Naive thymus-derived CD8-positive, alpha-beta T cell (primary cell): ENCODE measurements at regions of chr12 and their contacts with region 1.

Region 1: DNA sequence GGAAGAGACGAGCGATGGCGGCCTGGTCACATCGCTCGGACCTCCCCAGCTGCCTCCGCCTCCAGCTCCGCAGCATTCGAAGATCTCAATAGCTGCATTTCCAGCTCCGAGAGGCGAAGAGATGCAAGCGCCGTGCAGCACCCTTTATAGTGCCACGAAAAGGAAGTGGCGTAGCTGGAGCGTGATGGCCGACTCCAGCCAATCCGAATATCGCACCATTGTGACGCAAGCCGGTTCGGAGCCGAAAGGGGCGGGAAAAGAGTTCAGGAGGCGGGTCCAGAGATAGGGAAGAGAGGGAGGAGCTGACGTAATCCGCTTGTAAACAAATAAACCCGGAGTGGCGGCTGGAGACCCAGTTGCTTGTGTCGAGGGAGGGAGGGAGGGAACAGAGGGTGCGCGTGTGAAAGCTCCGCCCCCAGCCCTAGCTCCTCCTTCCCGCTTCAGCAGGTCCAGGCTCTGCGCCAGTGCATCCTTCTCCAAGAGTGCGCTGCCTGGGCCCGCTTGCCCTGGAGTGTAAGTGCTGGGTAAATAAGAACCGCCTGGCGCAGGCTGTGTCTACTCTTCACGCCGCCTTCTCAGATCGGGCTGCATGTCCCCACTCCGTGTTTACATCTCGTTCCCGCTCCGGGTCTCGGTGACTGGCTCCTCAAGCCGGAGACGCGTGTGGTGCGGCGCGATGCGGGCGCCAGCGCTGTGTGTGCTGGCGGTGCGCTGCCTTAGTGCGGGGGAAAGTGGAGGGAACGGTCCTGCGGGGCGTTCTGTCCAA is at the start of gene BTG1:
- DNase-seq: peak; percentile 87 to 100 (median 100)
- ATAC-seq: peak; percentile 68 to 72
- H3K4me3 Mint-ChIP-seq: peak within 1 kb of the TSS; percentile 89 to 100 (median 100)
- H3K27ac Mint-ChIP-seq: peak within 1 kb of the TSS; percentile 91 to 100 (median 99)
- H3K4me1 Mint-ChIP-seq: peaks cover 20 to 38% (median 30%) of the 10 kb centered on the region in 4 donors
- H3K27me3 Mint-ChIP-seq: peaks cover 0 to 4% (median 0%) of the 10 kb centered on the region in 5 donors
- polyA plus RNA-seq, gene BTG1: 705 to 889 (median 719) TPM

Region 2: DNA sequence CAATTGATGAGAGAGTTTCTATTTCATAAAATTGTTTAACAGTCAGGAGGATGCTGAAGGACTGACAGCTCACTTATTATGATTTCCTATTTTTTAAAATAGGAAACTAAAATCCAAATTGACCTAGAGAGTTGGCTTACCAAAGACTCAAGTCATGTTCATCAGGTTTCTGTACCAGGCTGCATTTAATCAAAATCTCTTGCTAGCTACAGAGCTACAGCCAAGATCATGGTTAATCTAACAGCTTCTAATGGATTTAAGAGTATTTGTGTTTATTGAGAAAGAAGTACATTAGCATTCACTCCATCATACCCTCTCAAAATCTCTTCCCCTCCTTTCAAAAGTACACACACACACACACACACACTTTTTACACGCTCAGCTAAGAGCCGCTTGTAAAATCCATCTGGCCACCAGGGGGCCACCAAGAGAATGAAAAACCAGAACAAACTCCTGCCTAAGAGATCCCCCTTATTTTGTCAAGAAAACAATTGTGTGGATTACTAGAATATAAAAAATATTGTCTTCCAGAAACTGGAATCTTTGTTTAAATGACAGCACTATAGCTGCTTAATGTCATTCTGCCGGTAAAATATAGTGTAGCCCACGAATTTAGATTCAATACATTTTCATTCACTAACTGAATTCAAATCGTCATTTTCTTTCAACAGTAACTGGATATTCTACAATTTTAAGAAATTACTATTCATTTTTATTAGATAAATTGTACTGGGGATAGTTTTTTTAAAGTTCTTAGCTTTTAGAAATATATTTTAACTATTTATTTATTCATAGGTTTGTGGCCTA is 334.2 kb before region 1 on chr12:
- POLR2A ChIA-PET with region 1: interaction called, 40 read pairs
- DNase-seq: peak; percentile 55 to 87 (median 74)
- ATAC-seq: peak; percentile 84 to 90
- H3K4me3 Mint-ChIP-seq: peak overlapping the region in 8 of 10 donors; percentile 29 to 73 (median 56)
- H3K27ac Mint-ChIP-seq: peak overlapping the region; percentile 77 to 94 (median 89)
- H3K4me1 Mint-ChIP-seq: peaks cover 7 to 34% (median 30%) of the 10 kb centered on the region in 4 donors
- H3K27me3 Mint-ChIP-seq: no peaks in the 10 kb centered on the region

Region 3: DNA sequence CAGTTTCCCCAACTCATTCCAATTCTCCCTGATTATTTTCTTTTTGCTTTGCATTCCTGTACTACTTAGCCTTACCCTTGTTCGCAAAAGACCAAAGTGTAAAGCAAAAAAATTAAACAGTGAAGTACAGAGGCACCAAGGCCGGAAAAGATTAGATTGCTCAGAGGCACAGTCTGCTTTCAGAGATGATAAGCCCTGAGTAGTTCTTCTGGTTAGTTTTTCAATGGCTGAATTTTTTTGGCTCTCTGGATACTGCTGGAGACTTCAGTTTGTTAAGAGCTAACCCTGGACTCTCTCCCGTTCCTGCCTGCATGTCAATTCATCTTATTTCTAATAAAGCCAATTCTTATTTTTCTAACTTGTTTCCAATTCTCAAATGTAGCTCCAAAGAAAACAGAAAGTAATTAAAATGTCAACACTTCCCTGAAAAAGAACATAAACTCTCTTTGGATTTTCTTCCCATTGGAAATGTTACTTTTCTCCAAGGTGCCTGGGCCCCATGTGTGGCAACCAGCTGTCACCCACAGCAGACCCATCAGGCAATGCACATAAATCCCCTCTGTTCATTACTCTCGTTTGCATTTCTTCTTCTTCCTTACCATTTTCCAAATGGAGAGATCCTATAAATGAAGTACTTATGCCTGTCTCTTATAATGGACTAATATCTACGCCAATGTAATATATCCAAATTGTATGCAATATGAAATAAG is 143.1 kb before region 1 on chr12:
- POLR2A ChIA-PET with region 1: interaction called, 19 read pairs
- DNase-seq: no peak
- ATAC-seq: peak; percentile 54 to 74
- H3K4me3 Mint-ChIP-seq: peak overlapping the region; percentile 23 to 79 (median 60)
- H3K27ac Mint-ChIP-seq: peak overlapping the region; percentile 78 to 96 (median 88)
- H3K4me1 Mint-ChIP-seq: peaks cover 28 to 60% (median 58%) of the 10 kb centered on the region in 4 donors
- H3K27me3 Mint-ChIP-seq: no peaks in the 10 kb centered on the region

Region 4: GRCh38 chr12:92070054-92070863 is 75.7 kb before region 1 on chr12:
- POLR2A ChIA-PET with region 1: no interaction called
- DNase-seq: no peak
- ATAC-seq: no peak
- H3K4me3 Mint-ChIP-seq: peak overlapping the region in 1 of 10 donors; percentile 18
- H3K27ac Mint-ChIP-seq: peak overlapping the region in 5 of 10 donors; percentile 1 to 80 (median 48)
- H3K4me1 Mint-ChIP-seq: peaks cover 16 to 44% (median 32%) of the 10 kb centered on the region in 4 donors
- H3K27me3 Mint-ChIP-seq: no peaks in the 10 kb centered on the region

Region 5: GRCh38 chr12:92108651-92109050 is 37.3 kb before region 1 on chr12:
- POLR2A ChIA-PET with region 1: interaction called, 21 read pairs
- DNase-seq: no peak
- ATAC-seq: no peak
- H3K4me3 Mint-ChIP-seq: peak overlapping the region in 9 of 10 donors; percentile 17 to 85 (median 68)
- H3K27ac Mint-ChIP-seq: peak overlapping the region; percentile 36 to 93 (median 86)
- H3K4me1 Mint-ChIP-seq: peaks cover 48 to 87% (median 83%) of the 10 kb centered on the region in 4 donors
- H3K27me3 Mint-ChIP-seq: no peaks in the 10 kb centered on the region

Region 6: GRCh38 chr12:92170050-92170449 is 24.1 kb after region 1 on chr12:
- POLR2A ChIA-PET with region 1: interaction called, 31 read pairs
- DNase-seq: no peak
- ATAC-seq: no peak
- H3K4me3 Mint-ChIP-seq: no peak overlapping the region
- H3K27ac Mint-ChIP-seq: peak overlapping the region in 4 of 10 donors; percentile 0 to 29 (median 13)
- H3K4me1 Mint-ChIP-seq: peaks cover 19 to 53% (median 35%) of the 10 kb centered on the region in 4 donors
- H3K27me3 Mint-ChIP-seq: no peaks in the 10 kb centered on the region

Region 7: DNA sequence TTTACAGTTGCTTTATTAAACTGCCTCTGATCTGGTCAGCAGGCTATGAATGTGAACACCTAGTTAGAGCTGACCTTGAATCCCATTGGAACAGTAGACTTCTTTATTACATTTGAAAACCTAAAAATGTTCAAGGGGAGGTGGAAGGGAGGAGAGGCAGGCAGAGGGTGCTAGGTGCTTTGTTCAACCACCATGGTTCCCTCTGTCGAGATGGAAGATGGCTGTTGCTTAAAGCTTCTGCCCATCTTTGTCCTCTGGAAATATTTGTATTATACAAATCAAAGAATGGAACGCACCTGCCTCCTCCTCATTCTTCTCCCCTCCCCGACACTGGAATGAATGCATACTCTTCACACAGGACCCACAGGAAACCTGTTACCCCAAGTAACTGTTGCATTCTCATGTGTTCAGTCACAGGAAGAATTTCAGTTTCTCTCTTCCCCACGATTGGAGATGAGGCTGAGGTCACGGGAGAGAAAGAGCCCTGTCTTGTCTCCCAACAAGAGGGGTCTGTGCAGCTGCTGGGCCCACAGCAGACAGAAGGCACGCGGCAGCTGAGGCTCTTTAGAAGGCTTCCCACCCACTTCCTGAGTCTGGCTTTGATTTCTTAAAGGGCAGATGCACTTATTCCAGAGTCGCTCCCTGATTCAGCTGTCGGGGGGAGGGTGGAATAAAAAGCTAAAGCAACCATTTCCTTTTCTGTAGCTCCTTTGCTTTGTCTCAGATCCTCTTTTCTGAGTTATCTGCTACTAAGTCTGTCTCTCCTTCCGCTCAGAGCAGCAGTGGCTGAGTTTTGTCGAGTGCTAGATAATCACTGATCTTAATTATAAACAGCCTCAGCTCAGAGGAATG is 217.6 kb after region 1 on chr12:
- POLR2A ChIA-PET with region 1: interaction called, 88 read pairs
- DNase-seq: peak; percentile 21 to 80 (median 58)
- ATAC-seq: peak; percentile 72 to 82
- H3K4me3 Mint-ChIP-seq: peak overlapping the region; percentile 70 to 88 (median 84)
- H3K27ac Mint-ChIP-seq: peak overlapping the region; percentile 91 to 99 (median 97)
- H3K4me1 Mint-ChIP-seq: peaks cover 31 to 78% (median 71%) of the 10 kb centered on the region in 4 donors
- H3K27me3 Mint-ChIP-seq: no peaks in the 10 kb centered on the region

Region 8: GRCh38 chr12:92570056-92570753 is 424.3 kb after region 1 on chr12:
- POLR2A ChIA-PET with region 1: interaction called, 34 read pairs
- DNase-seq: peak in 9 of 10 donors; percentile 14 to 82 (median 53)
- ATAC-seq: peak; percentile 94 to 97
- H3K4me3 Mint-ChIP-seq: no peak overlapping the region
- H3K27ac Mint-ChIP-seq: no peak overlapping the region
- H3K4me1 Mint-ChIP-seq: peaks cover 2 to 22% (median 11%) of the 10 kb centered on the region in 4 donors
- H3K27me3 Mint-ChIP-seq: no peaks in the 10 kb centered on the region